ENCODE measurements at regions of chr10 and their contacts with region 1.

Region 1: GRCh38 chr10:44864637-44865288 is 46.4 kb upstream of the TMEM72 start:
- DNase-seq: peak; percentile 88

Region 2: GRCh38 chr10:43671656-43672531 is 1192.9 kb before region 1 on chr10:
- in situ Hi-C with region 1: loop called (anchors 25 kb)
- DNase-seq: peak; percentile 67

Region 3: DNA sequence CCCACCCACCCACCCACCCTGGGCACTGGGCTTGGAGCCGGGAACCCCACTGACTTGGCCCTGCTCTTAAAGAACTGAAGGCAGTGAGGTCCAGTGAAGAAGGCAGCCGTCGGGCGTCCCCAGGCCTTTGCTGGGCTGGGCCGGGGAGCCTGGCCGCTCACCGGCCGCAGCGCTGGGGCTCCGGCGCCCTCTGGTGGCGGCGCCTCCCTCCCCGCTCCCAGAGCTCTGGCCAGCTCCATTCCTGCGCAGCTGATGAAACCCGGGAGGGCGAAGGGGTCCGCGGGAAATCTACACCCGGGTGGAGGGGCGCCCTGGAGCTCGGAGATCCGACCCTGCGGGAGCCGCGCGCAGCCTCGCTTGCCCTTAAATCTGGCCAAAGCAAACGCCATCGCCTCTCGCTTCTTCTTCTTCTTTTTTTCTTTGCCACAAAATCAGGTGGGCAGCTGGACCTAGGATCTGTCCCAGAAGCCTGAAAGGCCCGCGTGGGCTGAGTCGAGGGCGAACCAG is 478.2 kb before region 1 on chr10:
- in situ Hi-C with region 1: loop called (anchors 25 kb)
- DNase-seq: peak; percentile 47